Endothelial cell of umbilical vein (primary cell): ENCODE measurements at regions of chr15 and their contacts with region 1.

Region 1: DNA sequence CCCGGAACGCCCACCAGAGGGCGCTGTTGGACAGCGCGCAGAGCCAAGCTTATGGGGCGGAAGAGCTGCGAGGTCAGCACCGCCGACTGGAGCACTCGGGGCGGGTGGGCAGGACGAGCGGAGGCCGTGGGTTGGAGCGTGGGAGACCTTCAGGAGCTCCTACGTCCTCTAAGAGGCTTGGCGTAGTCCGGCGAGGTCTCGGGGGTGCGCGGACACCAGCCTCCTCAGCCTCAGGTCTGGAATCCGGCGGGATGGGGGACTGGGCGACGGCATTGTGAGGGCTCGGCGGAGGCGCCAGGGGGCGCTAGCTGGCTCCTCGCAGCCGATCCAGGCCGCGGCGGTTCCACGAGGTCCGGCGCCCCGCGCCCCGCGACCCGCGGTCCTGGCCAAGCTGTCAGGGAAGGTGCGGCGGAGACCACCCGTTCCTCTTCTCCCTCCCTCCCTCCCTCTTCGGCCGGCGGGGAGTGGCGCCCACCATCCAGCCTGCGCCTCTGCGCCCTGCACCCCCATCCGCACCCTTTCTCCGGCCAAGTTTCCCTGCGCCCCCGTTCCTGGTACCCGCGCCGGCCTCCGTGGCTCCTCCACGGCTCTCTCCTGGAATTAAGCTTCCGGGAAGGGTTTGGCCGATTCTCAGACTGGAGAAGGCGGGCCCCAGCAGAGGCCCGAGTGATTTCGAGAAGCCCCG is 24.3 kb upstream of the POLG start:
- DNase-seq: peak; percentile 88
- H3K4me3 ChIP-seq: peak overlapping the region in 2 of 3 experiments; percentile 37 to 39
- H3K27ac ChIP-seq: no peak overlapping the region
- H3K4me1 ChIP-seq: no peaks in the 10 kb centered on the region
- H3K27me3 ChIP-seq: peaks cover 53 to 65% of the 10 kb centered on the region in 2 experiments
- CTCF ChIP-seq: peak; percentile 76 to 88
- POLR2A ChIP-seq: no peak

Region 2: GRCh38 chr15:89341316-89342005 is 17.4 kb before region 1 on chr15:
- CTCF ChIA-PET with region 1: interaction called, 62 read pairs
- POLR2A ChIA-PET with region 1: no interaction called
- dilution Hi-C with region 1: no loop called
- intact Hi-C with region 1: no loop called
- DNase-seq: no peak
- H3K4me3 ChIP-seq: no peak overlapping the region
- H3K27ac ChIP-seq: no peak overlapping the region
- H3K4me1 ChIP-seq: no peaks in the 10 kb centered on the region
- H3K27me3 ChIP-seq: peaks cover 6 to 9% of the 10 kb centered on the region in 2 experiments
- CTCF ChIP-seq: no peak
- POLR2A ChIP-seq: no peak

Region 3: GRCh38 chr15:89383365-89384175 is 24.7 kb after region 1 on chr15:
- CTCF ChIA-PET with region 1: interaction called, 70 read pairs
- POLR2A ChIA-PET with region 1: no interaction called
- dilution Hi-C with region 1: no loop called
- intact Hi-C with region 1: no loop called
- DNase-seq: no peak
- H3K4me3 ChIP-seq: no peak overlapping the region
- H3K27ac ChIP-seq: no peak overlapping the region
- H3K4me1 ChIP-seq: peaks cover 2% of the 10 kb centered on the region
- H3K27me3 ChIP-seq: peaks cover 58 to 68% of the 10 kb centered on the region in 2 experiments
- CTCF ChIP-seq: no peak
- POLR2A ChIP-seq: no peak

Region 4: DNA sequence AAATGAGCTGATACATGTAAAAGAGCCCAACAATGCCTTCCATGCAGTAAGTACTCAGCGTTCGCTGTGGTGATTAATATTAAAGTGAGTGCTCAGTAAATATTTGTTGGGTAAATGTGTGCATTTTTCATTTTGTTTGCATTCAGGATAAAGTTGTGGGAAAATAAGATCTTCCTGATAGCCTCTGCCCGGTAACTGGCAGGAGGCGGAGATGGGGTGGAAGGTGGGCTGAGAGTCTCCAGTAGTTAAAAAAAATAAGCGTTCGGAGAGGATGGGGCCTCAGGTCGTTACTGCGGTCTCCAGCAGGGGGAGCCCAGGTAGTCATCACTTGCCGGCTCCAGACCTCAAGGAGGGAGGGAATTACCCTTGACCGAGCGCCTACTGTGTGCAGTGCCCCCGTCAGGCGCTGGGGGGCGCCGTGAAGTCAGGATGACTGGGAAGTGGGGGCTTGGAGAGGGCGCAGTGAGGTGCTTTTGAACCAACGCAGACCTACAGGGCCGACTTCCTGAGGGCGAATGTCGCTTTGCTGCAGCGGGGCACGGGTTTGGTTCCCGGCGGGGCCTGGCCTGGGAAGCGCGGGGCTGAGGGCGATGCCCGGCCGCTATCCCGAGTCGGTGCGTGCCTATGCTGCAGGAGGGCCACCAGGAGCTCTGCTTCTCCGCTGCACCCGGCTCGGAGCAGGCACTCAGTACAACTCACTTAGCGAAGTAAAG is 57.4 kb after region 1 on chr15:
- CTCF ChIA-PET with region 1: interaction called, 99 read pairs
- POLR2A ChIA-PET with region 1: interaction called, 3 read pairs
- dilution Hi-C with region 1: no loop called
- intact Hi-C with region 1: loop called (anchors 5 kb)
- DNase-seq: peak; percentile 71
- H3K4me3 ChIP-seq: no peak overlapping the region
- H3K27ac ChIP-seq: no peak overlapping the region
- H3K4me1 ChIP-seq: no peaks in the 10 kb centered on the region
- H3K27me3 ChIP-seq: peaks cover 48 to 61% of the 10 kb centered on the region in 2 experiments
- CTCF ChIP-seq: peak; percentile 88 to 98
- POLR2A ChIP-seq: no peak

Region 5: GRCh38 chr15:89457097-89457496 is 98.2 kb after region 1 on chr15:
- CTCF ChIA-PET with region 1: interaction called, 12 read pairs
- POLR2A ChIA-PET with region 1: no interaction called
- dilution Hi-C with region 1: no loop called
- intact Hi-C with region 1: no loop called
- DNase-seq: no peak
- H3K4me3 ChIP-seq: no peak overlapping the region
- H3K27ac ChIP-seq: no peak overlapping the region
- H3K4me1 ChIP-seq: no peaks in the 10 kb centered on the region
- H3K27me3 ChIP-seq: peaks cover 3 to 9% of the 10 kb centered on the region in 2 experiments
- CTCF ChIP-seq: no peak
- POLR2A ChIP-seq: no peak